ENCODE measurements at regions of chr2 and their contacts with region 1.

Region 1: DNA sequence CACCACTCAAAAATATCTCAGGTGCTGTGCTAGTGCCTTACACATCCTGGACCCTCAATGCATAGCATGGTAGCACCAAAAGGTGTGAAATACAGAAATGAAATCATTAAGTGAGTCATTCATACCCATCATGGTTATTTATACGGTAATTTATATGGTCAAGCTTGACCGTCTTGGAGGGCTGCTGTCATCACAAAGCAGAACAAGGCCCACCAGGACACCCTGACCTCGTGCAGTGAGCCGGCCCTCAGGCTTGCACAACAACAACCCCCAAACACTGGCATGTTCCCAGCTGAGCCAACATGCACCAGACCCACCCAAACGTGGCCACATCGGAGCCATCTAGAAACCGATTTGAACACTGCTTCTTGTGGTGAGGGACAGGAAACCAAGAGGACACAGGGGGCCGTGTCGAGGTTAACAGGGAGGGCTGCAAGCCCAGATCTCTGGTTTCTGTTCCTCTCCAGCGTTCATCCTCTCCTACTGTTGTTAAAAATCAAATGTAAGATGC is 378.5 kb upstream of the ID2 start:
- DNase-seq: peak; percentile 63 to 87 (median 82)
- ATAC-seq: peak; percentile 83
- H3K4me3 ChIP-seq: peak overlapping the region; percentile 10 to 25
- H3K4me3 Mint-ChIP-seq: peak overlapping the region; percentile 69
- H3K27ac ChIP-seq: peak overlapping the region in 1 of 2 experiments; percentile 63
- H3K27ac Mint-ChIP-seq: peak overlapping the region; percentile 74
- H3K4me1 ChIP-seq: peaks cover 49% of the 10 kb centered on the region
- H3K4me1 Mint-ChIP-seq: peaks cover 55% of the 10 kb centered on the region
- H3K27me3 ChIP-seq: no peaks in the 10 kb centered on the region
- H3K27me3 Mint-ChIP-seq: peaks cover 1% of the 10 kb centered on the region
- CTCF ChIP-seq: peak; percentile 36

Region 2: DNA sequence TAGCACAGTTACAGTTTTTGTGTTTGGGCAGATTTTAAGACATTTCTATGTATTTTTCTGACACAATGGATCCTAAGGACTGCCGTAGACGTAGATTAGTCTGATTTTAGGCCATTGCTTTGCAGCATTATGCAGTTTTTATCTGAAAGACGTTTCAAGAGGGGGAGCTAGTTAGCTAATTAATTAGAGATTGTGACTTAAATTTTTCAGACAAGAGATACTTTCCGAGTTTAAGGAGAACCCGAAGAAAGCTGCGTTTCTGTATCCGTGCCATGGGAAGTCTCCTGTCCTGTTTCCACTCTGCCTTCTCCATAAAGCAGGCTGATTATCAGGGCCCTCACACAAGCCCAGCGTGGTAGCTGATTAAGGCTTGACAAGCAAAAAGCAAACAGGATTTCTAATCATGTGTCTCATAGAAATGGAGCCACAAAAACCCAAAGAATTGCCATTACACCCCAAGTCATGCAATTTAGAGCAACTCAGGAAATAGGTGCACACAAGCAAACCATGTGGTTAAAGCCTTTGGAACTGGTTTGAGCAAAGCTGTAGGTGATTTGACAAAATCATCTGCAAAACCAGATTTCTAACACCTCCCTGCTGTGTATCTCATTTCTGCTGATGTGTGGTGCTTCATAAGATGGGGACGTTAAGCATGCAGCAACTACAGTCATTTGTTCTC is 578.1 kb before region 1 on chr2:
- CTCF ChIA-PET with region 1: no interaction called
- POLR2A ChIA-PET with region 1: no interaction called
- intact Hi-C with region 1: loop called in 1 of 2 experiments (anchors 5 kb)
- DNase-seq: peak in 7 of 9 experiments; percentile 18 to 91 (median 32)
- ATAC-seq: peak; percentile 79
- H3K4me3 ChIP-seq: peak overlapping the region; percentile 48 to 58
- H3K4me3 Mint-ChIP-seq: peak overlapping the region; percentile 90
- H3K27ac ChIP-seq: peak overlapping the region; percentile 6 to 77
- H3K27ac Mint-ChIP-seq: peak overlapping the region; percentile 94
- H3K4me1 ChIP-seq: peaks cover 29% of the 10 kb centered on the region
- H3K4me1 Mint-ChIP-seq: peaks cover 70% of the 10 kb centered on the region
- H3K27me3 ChIP-seq: no peaks in the 10 kb centered on the region
- H3K27me3 Mint-ChIP-seq: no peaks in the 10 kb centered on the region
- CTCF ChIP-seq: no peak

Region 3: GRCh38 chr2:8334866-8335325 is 31.5 kb after region 1 on chr2:
- CTCF ChIA-PET with region 1: no interaction called
- POLR2A ChIA-PET with region 1: interaction called, 3 read pairs
- intact Hi-C with region 1: loop called in 1 of 2 experiments (anchors 5 kb)
- DNase-seq: peak in 2 of 9 experiments; percentile 29 to 41
- ATAC-seq: no peak
- H3K4me3 ChIP-seq: no peak overlapping the region
- H3K4me3 Mint-ChIP-seq: no peak overlapping the region
- H3K27ac ChIP-seq: peak overlapping the region in 1 of 2 experiments; percentile 59
- H3K27ac Mint-ChIP-seq: peak overlapping the region; percentile 82
- H3K4me1 ChIP-seq: peaks cover 12% of the 10 kb centered on the region
- H3K4me1 Mint-ChIP-seq: peaks cover 20% of the 10 kb centered on the region
- H3K27me3 ChIP-seq: no peaks in the 10 kb centered on the region
- H3K27me3 Mint-ChIP-seq: no peaks in the 10 kb centered on the region
- CTCF ChIP-seq: no peak

Region 4: DNA sequence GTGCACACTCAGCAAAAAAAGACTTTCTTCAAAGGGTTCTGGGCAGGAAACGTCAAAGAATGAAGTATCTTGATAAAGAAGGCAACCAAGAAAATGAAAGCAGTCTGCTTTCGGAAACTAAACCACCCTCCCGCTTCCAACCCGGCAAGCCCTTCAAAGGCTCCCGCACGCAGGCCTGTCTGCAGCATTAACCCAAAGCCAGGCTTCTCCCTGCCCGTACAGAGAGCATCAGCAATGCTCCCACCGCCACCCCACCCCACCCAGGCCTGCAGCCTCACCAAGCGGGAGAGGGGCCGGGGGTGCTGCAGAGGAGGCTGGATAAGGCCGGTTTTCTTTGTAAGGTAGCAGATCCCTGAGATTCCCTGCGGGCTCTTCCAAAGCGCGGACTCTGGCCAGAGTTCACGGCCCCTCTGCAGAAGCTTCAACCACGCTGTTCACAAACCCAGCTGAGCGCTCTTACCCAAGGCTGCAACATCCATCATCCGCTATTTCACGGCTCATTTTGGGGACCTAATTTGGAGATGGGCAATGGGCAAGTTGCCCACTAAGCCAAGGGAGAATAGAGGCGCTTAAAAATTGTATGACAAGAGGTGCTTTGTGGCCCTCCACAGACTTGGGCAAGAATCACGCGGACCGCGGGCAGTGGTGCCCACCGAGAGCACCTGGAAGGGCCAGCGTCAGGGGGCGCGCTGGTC is 152.9 kb after region 1 on chr2:
- CTCF ChIA-PET with region 1: no interaction called
- POLR2A ChIA-PET with region 1: no interaction called
- intact Hi-C with region 1: loop called in 1 of 2 experiments (anchors 2 kb)
- DNase-seq: peak in 7 of 9 experiments; percentile 32 to 77 (median 59)
- ATAC-seq: peak; percentile 70
- H3K4me3 ChIP-seq: peak overlapping the region; percentile 36 to 40
- H3K4me3 Mint-ChIP-seq: peak overlapping the region; percentile 86
- H3K27ac ChIP-seq: peak overlapping the region in 1 of 2 experiments; percentile 80
- H3K27ac Mint-ChIP-seq: peak overlapping the region; percentile 86
- H3K4me1 ChIP-seq: peaks cover 20% of the 10 kb centered on the region
- H3K4me1 Mint-ChIP-seq: peaks cover 29% of the 10 kb centered on the region
- H3K27me3 ChIP-seq: no peaks in the 10 kb centered on the region
- H3K27me3 Mint-ChIP-seq: peaks cover 16% of the 10 kb centered on the region
- CTCF ChIP-seq: no peak

Region 5: GRCh38 chr2:8544786-8545694 is 241.7 kb after region 1 on chr2:
- CTCF ChIA-PET with region 1: no interaction called
- POLR2A ChIA-PET with region 1: interaction called, 3 read pairs
- intact Hi-C with region 1: loop called in 1 of 2 experiments (anchors 10 kb)
- DNase-seq: peak; percentile 21 to 90 (median 76)
- ATAC-seq: peak; percentile 87
- H3K4me3 ChIP-seq: no peak overlapping the region
- H3K4me3 Mint-ChIP-seq: no peak overlapping the region
- H3K27ac ChIP-seq: peak overlapping the region in 1 of 2 experiments; percentile 88
- H3K27ac Mint-ChIP-seq: peak overlapping the region; percentile 75
- H3K4me1 ChIP-seq: peaks cover 29% of the 10 kb centered on the region
- H3K4me1 Mint-ChIP-seq: peaks cover 40% of the 10 kb centered on the region
- H3K27me3 ChIP-seq: no peaks in the 10 kb centered on the region
- H3K27me3 Mint-ChIP-seq: no peaks in the 10 kb centered on the region
- CTCF ChIP-seq: peak; percentile 42

Measured in CD8-positive, alpha-beta T cell (primary cell).